A673 (cell line): ENCODE measurements at regions of chr10 and their contacts with region 1.

Region 1: GRCh38 chr10:58414270-58415041 is 29.2 kb downstream of the TFAM start:
- DNase-seq: peak; percentile 54
- H3K4me3 ChIP-seq: no peak overlapping the region
- H3K27ac ChIP-seq: no peak overlapping the region
- H3K4me1 ChIP-seq: no peaks in the 10 kb centered on the region
- H3K27me3 ChIP-seq: no peaks in the 10 kb centered on the region
- CTCF ChIP-seq: peak; percentile 48

Region 2: GRCh38 chr10:58137813-58138212 is 276.6 kb before region 1 on chr10:
- CTCF ChIA-PET with region 1: no interaction called
- POLR2A ChIA-PET with region 1: no interaction called
- intact Hi-C with region 1: no loop called
- DNase-seq: peak; percentile 15
- H3K4me3 ChIP-seq: no peak overlapping the region
- H3K27ac ChIP-seq: no peak overlapping the region
- H3K4me1 ChIP-seq: no peaks in the 10 kb centered on the region
- H3K27me3 ChIP-seq: peaks cover 3% of the 10 kb centered on the region
- CTCF ChIP-seq: no peak

Region 3: DNA sequence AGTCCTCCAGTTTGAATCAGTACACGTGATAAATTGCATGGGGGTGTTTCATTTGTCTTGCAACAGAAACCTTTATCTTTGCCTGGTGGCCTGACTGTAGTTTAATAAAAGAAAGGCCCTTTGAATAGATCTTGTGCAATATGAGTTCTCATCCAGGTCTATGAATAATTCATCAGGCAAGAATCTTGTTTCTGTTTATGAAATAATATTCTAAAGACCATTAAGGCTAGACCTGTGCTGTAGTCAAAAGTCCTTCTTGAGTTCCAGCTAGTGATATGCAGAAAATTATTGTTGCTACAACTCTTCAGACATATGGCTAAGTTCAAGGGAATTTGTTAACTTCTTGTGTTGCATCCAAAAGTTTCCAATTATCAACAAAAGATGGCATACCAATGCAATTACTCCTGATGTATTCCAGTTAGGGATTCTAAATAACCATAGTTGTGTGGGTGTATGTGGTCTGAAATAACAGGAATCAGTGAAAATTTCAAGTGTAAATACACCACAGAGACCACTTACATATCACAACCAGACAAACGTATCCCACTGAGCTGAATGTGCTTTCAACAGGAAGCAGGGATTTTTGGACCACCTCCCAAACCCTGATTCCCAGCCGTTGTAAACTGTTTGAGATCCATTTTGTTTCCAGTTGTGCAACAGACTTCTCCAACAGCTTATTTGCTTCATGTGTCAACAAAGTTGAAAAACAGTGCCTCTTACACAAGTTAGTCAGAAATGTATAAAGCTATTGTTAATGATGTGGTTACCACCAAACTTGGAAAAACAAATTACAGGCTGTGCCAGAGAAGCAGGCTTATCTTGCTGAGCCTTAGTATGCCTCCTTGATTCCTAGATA is 43.5 kb after region 1 on chr10:
- CTCF ChIA-PET with region 1: no interaction called
- POLR2A ChIA-PET with region 1: no interaction called
- intact Hi-C with region 1: no loop called
- DNase-seq: peak; percentile 73
- H3K4me3 ChIP-seq: no peak overlapping the region
- H3K27ac ChIP-seq: peak overlapping the region; percentile 2
- H3K4me1 ChIP-seq: peaks cover 4% of the 10 kb centered on the region
- H3K27me3 ChIP-seq: no peaks in the 10 kb centered on the region
- CTCF ChIP-seq: no peak

Region 4: GRCh38 chr10:58513188-58514110 is 99.0 kb after region 1 on chr10:
- CTCF ChIA-PET with region 1: no interaction called
- POLR2A ChIA-PET with region 1: no interaction called
- intact Hi-C with region 1: loop called (anchors 5 kb)
- DNase-seq: peak; percentile 3
- H3K4me3 ChIP-seq: peak overlapping the region; percentile 53
- H3K27ac ChIP-seq: no peak overlapping the region
- H3K4me1 ChIP-seq: no peaks in the 10 kb centered on the region
- H3K27me3 ChIP-seq: peaks cover 76% of the 10 kb centered on the region
- CTCF ChIP-seq: no peak

Region 5: GRCh38 chr10:58531084-58531695 is 116.7 kb after region 1 on chr10:
- CTCF ChIA-PET with region 1: interaction called, 8 read pairs
- POLR2A ChIA-PET with region 1: no interaction called
- intact Hi-C with region 1: loop called (anchors 5 kb)
- DNase-seq: peak; percentile 78
- H3K4me3 ChIP-seq: no peak overlapping the region
- H3K27ac ChIP-seq: no peak overlapping the region
- H3K4me1 ChIP-seq: no peaks in the 10 kb centered on the region
- H3K27me3 ChIP-seq: peaks cover 4% of the 10 kb centered on the region
- CTCF ChIP-seq: peak; percentile 79

Region 6: DNA sequence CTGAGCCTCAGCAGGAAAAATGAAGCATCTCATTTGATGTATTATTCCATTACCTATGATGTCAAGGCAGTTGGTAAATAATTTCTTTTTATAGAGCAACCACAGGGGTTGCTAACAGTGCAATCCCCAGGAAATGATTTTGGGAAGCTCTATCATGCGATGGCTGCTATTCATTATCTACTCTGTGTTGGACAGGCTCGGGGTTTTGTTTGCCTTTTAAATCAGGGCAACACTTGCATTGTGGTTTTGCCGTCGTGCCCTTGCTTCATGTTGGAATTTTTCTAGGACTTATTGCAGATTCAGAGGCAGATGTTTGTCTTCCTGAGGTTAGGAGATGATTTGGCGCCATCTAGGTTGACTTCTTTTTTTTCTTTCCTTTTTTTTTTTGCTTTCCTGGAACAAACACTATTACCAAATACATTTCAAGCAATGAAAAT is 226.7 kb after region 1 on chr10:
- CTCF ChIA-PET with region 1: interaction called, 3 read pairs
- POLR2A ChIA-PET with region 1: no interaction called
- intact Hi-C with region 1: loop called (anchors 10 kb)
- DNase-seq: peak; percentile 30
- H3K4me3 ChIP-seq: no peak overlapping the region
- H3K27ac ChIP-seq: no peak overlapping the region
- H3K4me1 ChIP-seq: no peaks in the 10 kb centered on the region
- H3K27me3 ChIP-seq: no peaks in the 10 kb centered on the region
- CTCF ChIP-seq: peak; percentile 50

Region 7: GRCh38 chr10:58775960-58776567 is 361.6 kb after region 1 on chr10:
- CTCF ChIA-PET with region 1: no interaction called
- POLR2A ChIA-PET with region 1: no interaction called
- intact Hi-C with region 1: loop called (anchors 10 kb)
- DNase-seq: peak; percentile 24
- H3K4me3 ChIP-seq: no peak overlapping the region
- H3K27ac ChIP-seq: no peak overlapping the region
- H3K4me1 ChIP-seq: no peaks in the 10 kb centered on the region
- H3K27me3 ChIP-seq: no peaks in the 10 kb centered on the region
- CTCF ChIP-seq: no peak